CD4-positive, alpha-beta T cell (primary cell): ENCODE measurements at regions of chr13 and their contacts with region 1.

Region 1: DNA sequence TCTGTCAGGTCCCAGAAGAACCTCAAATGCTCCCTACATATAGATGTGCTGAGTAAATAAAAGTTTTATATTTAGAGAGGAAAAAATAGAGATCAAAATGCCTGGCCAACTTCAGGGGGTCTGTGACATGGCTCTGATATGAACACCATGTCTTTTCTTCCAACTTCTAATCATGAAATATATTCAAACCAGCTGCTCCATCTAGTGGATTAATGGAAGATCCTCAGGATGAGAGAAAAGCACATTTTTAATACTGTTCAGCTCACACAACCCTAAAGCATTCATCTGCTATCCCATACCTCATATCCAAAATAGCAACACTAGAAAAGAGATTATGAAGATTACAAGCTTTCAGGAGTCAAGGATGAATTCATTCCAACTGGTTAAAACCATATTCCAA is 56.0 kb upstream of the DOCK9 start:
- DNase-seq: peak in 3 of 14 experiments; percentile 39 to 53 (median 42)
- ATAC-seq: peak; percentile 70
- H3K4me3 ChIP-seq: no peak overlapping the region
- H3K4me3 Mint-ChIP-seq: no peak overlapping the region
- H3K27ac ChIP-seq: no peak overlapping the region
- H3K27ac Mint-ChIP-seq: peak overlapping the region; percentile 6
- H3K4me1 ChIP-seq: peaks cover 4% of the 10 kb centered on the region
- H3K4me1 Mint-ChIP-seq: peaks cover 51% of the 10 kb centered on the region
- H3K27me3 ChIP-seq: no peaks in the 10 kb centered on the region
- H3K27me3 Mint-ChIP-seq: no peaks in the 10 kb centered on the region
- CTCF ChIP-seq: peak; percentile 58

Region 2: DNA sequence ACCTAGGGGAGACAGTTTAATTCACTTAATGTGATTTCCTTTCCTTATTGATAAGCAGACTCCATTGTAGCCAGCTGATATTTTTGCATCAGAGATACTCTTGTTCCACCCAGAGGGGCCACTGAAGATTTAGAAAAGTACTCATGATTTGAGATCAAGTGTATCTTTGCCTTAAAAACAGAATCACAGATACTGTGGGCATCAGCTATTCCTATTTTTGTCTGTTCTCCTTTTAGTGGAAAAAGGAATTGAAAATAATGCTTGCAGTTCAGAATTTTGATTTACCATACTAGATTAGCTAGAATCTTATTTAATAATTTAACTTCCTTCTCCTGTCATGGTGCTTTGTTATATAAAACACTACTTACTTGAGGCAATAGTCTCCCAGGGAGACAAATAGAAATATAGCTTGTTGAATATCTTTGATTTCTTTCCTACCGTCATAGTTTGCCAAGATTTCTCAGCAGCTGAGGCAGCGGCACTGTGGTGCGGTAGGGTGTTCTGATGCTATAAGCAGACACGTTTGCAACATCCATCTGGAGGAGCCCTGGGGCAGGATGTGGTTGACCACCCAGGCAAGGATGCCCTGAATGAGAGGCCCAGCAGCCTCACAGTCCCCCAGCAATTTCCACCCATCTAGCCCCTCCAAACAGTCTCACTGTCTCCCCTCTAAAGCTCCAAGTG is 1646.9 kb before region 1 on chr13:
- CTCF ChIA-PET with region 1: no interaction called
- POLR2A ChIA-PET with region 1: no interaction called
- intact Hi-C with region 1: no loop called
- DNase-seq: peak in 2 of 14 experiments; percentile 14 to 37
- ATAC-seq: no peak
- H3K4me3 ChIP-seq: no peak overlapping the region
- H3K4me3 Mint-ChIP-seq: no peak overlapping the region
- H3K27ac ChIP-seq: no peak overlapping the region
- H3K27ac Mint-ChIP-seq: no peak overlapping the region
- H3K4me1 ChIP-seq: peaks cover 10% of the 10 kb centered on the region
- H3K4me1 Mint-ChIP-seq: peaks cover 31% of the 10 kb centered on the region
- H3K27me3 ChIP-seq: no peaks in the 10 kb centered on the region
- H3K27me3 Mint-ChIP-seq: no peaks in the 10 kb centered on the region
- CTCF ChIP-seq: no peak

Region 3: DNA sequence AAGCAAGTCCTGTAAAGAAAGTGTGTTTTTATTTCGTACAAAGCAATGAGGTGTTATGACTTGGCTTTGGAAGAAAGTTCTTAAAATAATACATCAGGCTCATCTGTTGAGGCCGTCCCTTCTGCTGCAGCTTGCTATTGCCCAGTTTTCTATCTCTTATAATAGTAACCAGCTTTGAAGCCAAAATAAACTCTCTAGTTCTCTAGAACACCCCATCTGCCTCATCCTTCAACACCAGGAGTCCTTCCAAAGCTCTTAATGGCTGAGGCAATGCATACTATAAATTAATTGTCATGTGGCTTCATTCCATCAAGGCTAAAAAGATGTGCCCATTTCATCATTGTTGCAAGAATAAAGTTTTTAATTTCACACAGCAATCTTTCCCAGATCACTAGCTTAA is 1129.8 kb before region 1 on chr13:
- CTCF ChIA-PET with region 1: no interaction called
- POLR2A ChIA-PET with region 1: no interaction called
- intact Hi-C with region 1: no loop called
- DNase-seq: no peak
- ATAC-seq: no peak
- H3K4me3 ChIP-seq: no peak overlapping the region
- H3K4me3 Mint-ChIP-seq: no peak overlapping the region
- H3K27ac ChIP-seq: no peak overlapping the region
- H3K27ac Mint-ChIP-seq: no peak overlapping the region
- H3K4me1 ChIP-seq: no peaks in the 10 kb centered on the region
- H3K4me1 Mint-ChIP-seq: no peaks in the 10 kb centered on the region
- H3K27me3 ChIP-seq: peaks cover 2 to 3% of the 10 kb centered on the region in 2 experiments
- H3K27me3 Mint-ChIP-seq: peaks cover 29% of the 10 kb centered on the region
- CTCF ChIP-seq: no peak

Region 4: GRCh38 chr13:98842864-98843481 is 190.8 kb before region 1 on chr13:
- CTCF ChIA-PET with region 1: interaction called, 4 read pairs
- POLR2A ChIA-PET with region 1: no interaction called
- intact Hi-C with region 1: loop called (anchors 2 to 5 kb)
- DNase-seq: peak; percentile 22 to 74 (median 53)
- ATAC-seq: peak; percentile 86
- H3K4me3 ChIP-seq: no peak overlapping the region
- H3K4me3 Mint-ChIP-seq: no peak overlapping the region
- H3K27ac ChIP-seq: no peak overlapping the region
- H3K27ac Mint-ChIP-seq: no peak overlapping the region
- H3K4me1 ChIP-seq: no peaks in the 10 kb centered on the region
- H3K4me1 Mint-ChIP-seq: peaks cover 11% of the 10 kb centered on the region
- H3K27me3 ChIP-seq: no peaks in the 10 kb centered on the region
- H3K27me3 Mint-ChIP-seq: no peaks in the 10 kb centered on the region
- CTCF ChIP-seq: peak; percentile 78

Region 5: DNA sequence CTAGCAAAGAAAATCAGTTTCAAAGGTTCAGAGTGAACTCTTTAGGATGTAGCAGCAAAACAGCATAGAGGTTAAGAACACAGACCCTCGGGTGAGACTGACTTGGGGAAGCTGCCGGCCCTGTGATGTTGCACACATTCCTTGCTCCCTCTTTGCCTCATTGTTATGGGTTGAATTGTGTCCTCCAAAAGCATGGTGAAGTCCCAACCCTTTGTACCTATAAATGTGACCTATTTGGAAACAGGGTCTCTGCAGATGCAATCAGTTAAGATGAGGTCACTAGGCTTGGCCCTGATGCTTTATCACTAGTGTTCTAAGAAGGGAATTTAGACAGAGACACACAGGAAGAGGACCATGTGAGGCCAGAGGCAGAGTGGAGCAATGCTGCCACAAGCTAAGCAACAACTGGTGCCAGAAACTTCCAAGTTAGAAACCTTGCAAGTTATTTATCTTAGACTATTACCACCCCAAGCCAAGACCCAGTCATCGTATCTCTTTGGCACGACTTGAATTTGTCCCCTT is 137.1 kb before region 1 on chr13:
- CTCF ChIA-PET with region 1: no interaction called
- POLR2A ChIA-PET with region 1: no interaction called
- intact Hi-C with region 1: loop called in 1 of 2 experiments (anchors 5 kb)
- DNase-seq: no peak
- ATAC-seq: no peak
- H3K4me3 ChIP-seq: no peak overlapping the region
- H3K4me3 Mint-ChIP-seq: no peak overlapping the region
- H3K27ac ChIP-seq: no peak overlapping the region
- H3K27ac Mint-ChIP-seq: peak overlapping the region; percentile 12
- H3K4me1 ChIP-seq: no peaks in the 10 kb centered on the region
- H3K4me1 Mint-ChIP-seq: no peaks in the 10 kb centered on the region
- H3K27me3 ChIP-seq: no peaks in the 10 kb centered on the region
- H3K27me3 Mint-ChIP-seq: no peaks in the 10 kb centered on the region
- CTCF ChIP-seq: no peak

Region 6: GRCh38 chr13:98998831-98999638 is 34.8 kb before region 1 on chr13:
- CTCF ChIA-PET with region 1: interaction called, 4 read pairs
- POLR2A ChIA-PET with region 1: interaction called, 6 read pairs
- intact Hi-C with region 1: loop called in 1 of 2 experiments (anchors 5 kb)
- DNase-seq: peak in 10 of 14 experiments; percentile 9 to 73 (median 29)
- ATAC-seq: peak; percentile 71
- H3K4me3 ChIP-seq: no peak overlapping the region
- H3K4me3 Mint-ChIP-seq: peak overlapping the region; percentile 85
- H3K27ac ChIP-seq: peak overlapping the region in 1 of 2 donors; percentile 14
- H3K27ac Mint-ChIP-seq: peak overlapping the region; percentile 94
- H3K4me1 ChIP-seq: peaks cover 81% of the 10 kb centered on the region
- H3K4me1 Mint-ChIP-seq: peaks cover 99% of the 10 kb centered on the region
- H3K27me3 ChIP-seq: no peaks in the 10 kb centered on the region
- H3K27me3 Mint-ChIP-seq: no peaks in the 10 kb centered on the region
- CTCF ChIP-seq: no peak

Region 7: GRCh38 chr13:99176309-99177276 is 142.8 kb after region 1 on chr13:
- CTCF ChIA-PET with region 1: interaction called, 3 read pairs
- POLR2A ChIA-PET with region 1: no interaction called
- intact Hi-C with region 1: loop called in 1 of 2 experiments (anchors 5 kb)
- DNase-seq: peak; percentile 64 to 89 (median 74)
- ATAC-seq: peak; percentile 93
- H3K4me3 ChIP-seq: peak overlapping the region; percentile 16
- H3K4me3 Mint-ChIP-seq: peak overlapping the region; percentile 42
- H3K27ac ChIP-seq: no peak overlapping the region
- H3K27ac Mint-ChIP-seq: peak overlapping the region; percentile 76
- H3K4me1 ChIP-seq: peaks cover 41% of the 10 kb centered on the region
- H3K4me1 Mint-ChIP-seq: peaks cover 40% of the 10 kb centered on the region
- H3K27me3 ChIP-seq: no peaks in the 10 kb centered on the region
- H3K27me3 Mint-ChIP-seq: no peaks in the 10 kb centered on the region
- CTCF ChIP-seq: peak; percentile 94